ENCODE measurements at regions of chr14 and their contacts with region 1.

Region 1: DNA sequence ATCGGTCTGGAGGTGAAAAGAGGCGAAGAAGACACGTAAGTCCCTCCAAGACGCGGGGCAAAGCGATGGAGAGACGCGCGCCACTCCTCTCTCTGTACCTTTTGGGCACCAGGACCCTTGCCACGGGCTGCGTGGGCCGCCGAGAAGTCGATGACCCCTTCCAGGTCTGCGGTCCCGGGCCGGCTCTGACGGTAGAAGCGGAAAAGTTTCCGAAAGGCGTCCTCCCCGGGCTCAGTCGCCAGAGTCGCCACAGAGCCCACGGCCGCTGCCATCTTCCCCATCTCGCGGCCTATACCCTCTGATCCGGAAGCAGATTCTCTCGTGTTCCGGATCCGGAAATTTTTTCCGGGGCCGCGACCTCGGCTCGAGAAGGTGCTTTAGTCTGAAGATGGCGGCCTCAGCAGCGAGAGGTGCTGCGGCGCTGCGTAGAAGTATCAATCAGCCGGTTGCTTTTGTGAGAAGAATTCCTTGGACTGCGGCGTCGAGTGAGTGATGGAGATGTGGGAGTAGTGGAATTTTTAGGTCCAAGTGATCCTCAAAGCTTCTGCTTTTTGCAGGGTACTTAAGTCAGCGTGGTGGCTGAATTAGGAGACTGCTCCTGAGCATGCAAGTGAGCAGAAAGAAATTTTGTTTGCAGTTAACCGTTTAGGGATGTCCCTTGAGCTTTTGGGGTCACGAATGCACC is at the starts of genes ALKBH1 and SLIRP:
- DNase-seq: peak; percentile 73 to 91 (median 87)
- ATAC-seq: peak; percentile 98
- H3K4me3 ChIP-seq: peak within 1 kb of the TSS; percentile 88
- H3K4me3 Mint-ChIP-seq: peak within 1 kb of the TSS; percentile 86 to 98 (median 94)
- H3K27ac ChIP-seq: peak within 1 kb of the TSS; percentile 79
- H3K27ac Mint-ChIP-seq: peak within 1 kb of the TSS; percentile 91 to 99 (median 94)
- H3K4me1 ChIP-seq: peaks cover 22 to 24% of the 10 kb centered on the region in 2 donors
- H3K4me1 Mint-ChIP-seq: peaks cover 26 to 58% (median 44%) of the 10 kb centered on the region in 7 donors
- H3K27me3 ChIP-seq: no peaks in the 10 kb centered on the region
- H3K27me3 Mint-ChIP-seq: no peaks in the 10 kb centered on the region
- total RNA-seq, gene ALKBH1: 10.2 to 20.3 (median 14.1) TPM
- total RNA-seq, gene SLIRP: 35.9 to 66.6 (median 45.5) TPM

Region 2: DNA sequence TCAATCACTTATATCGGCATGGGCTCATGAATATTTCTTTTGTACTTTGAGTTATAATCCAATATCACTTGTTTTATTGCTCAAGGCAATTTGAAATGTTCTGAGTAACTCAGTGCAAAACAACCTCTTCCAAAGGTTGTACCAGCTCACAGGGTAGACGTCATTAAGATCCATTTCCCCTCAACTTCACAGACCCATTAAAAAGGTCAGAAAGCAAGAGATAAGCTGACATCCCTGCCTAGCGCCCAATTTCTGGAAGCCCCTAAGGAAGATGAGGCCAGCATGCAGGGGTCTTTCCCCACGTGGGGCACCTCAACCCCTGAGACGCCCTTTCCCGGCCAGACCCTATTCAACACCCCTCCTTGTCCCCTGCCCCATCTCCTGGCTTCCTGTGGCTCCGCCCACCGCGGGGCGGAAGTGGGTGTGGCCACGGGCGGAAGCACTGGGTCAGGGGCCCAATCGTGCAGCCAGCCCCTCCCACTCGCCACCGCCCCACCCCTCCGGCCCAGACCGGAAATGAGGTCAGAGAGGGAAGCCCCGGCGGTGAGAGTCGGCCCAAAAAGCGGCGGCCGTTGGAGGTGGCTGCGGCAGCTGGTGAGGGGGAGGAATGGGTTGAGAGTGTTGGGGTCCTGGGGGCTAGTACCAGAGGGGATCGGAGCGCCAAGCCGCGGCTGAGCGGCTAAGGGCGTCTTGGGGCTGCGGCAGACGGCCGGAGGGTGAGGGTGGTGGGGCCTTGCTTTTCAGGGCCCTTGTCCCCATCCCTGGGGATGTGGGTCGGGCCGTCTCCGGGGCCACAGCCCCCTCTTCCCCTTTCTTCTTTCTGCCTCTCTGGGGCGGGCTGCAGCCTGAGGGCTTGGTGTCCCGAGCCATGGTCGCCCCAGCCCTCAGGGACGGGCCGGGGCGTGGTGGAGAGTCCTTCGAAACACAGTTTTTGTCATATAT is 1556.2 kb before region 1 on chr14 and contains the start of gene GPATCH2L:
- CTCF ChIA-PET with region 1: no interaction called
- POLR2A ChIA-PET with region 1: no interaction called
- intact Hi-C with region 1: loop called in 1 of 2 experiments (anchors 5 kb)
- DNase-seq: peak; percentile 90 to 98 (median 95)
- ATAC-seq: peak; percentile 96
- H3K4me3 ChIP-seq: peak within 1 kb of the TSS; percentile 91
- H3K4me3 Mint-ChIP-seq: peak within 1 kb of the TSS; percentile 89 to 98 (median 95)
- H3K27ac ChIP-seq: peak within 1 kb of the TSS; percentile 95
- H3K27ac Mint-ChIP-seq: peak within 1 kb of the TSS; percentile 86 to 98 (median 96)
- H3K4me1 ChIP-seq: peaks cover 40 to 44% of the 10 kb centered on the region in 2 donors
- H3K4me1 Mint-ChIP-seq: peaks cover 40 to 56% (median 53%) of the 10 kb centered on the region in 7 donors
- H3K27me3 ChIP-seq: no peaks in the 10 kb centered on the region
- H3K27me3 Mint-ChIP-seq: peaks cover 0 to 18% (median 0%) of the 10 kb centered on the region in 5 donors
- total RNA-seq, gene GPATCH2L: 60.4 to 83.1 (median 66.6) TPM

Region 3: GRCh38 chr14:77554207-77554606 is 153.7 kb before region 1 on chr14:
- CTCF ChIA-PET with region 1: interaction called, 3 read pairs
- POLR2A ChIA-PET with region 1: interaction called, 3 read pairs
- intact Hi-C with region 1: loop called in 1 of 2 experiments (anchors 5 kb)
- DNase-seq: no peak
- ATAC-seq: peak; percentile 40
- H3K4me3 ChIP-seq: no peak overlapping the region
- H3K4me3 Mint-ChIP-seq: peak overlapping the region in 1 of 10 donors; percentile 77
- H3K27ac ChIP-seq: no peak overlapping the region
- H3K27ac Mint-ChIP-seq: peak overlapping the region in 4 of 9 donors; percentile 2 to 89 (median 26)
- H3K4me1 ChIP-seq: no peaks in the 10 kb centered on the region
- H3K4me1 Mint-ChIP-seq: peaks cover 0 to 27% (median 6%) of the 10 kb centered on the region in 7 donors
- H3K27me3 ChIP-seq: no peaks in the 10 kb centered on the region
- H3K27me3 Mint-ChIP-seq: no peaks in the 10 kb centered on the region

Region 4: DNA sequence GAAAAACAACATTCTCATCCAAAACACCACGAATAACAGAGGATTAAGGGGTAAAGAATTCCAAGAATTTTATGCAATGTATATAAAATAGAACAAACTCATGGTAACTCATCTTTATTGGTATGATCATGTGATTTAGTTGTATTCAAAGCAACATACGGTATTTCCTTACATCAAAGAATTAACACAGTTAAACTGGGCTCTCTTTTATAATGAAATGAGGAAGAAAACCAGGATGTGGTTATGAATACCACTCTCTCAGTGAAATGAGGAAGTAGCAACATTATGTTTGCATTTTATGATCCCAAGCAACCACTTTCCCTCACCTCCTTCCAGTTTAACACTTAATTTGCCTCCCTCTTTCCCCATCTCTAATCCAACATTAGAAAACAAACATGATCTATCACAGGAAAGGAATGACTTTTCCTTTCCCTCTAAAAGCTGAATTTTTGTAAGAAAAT is 114.3 kb before region 1 on chr14:
- CTCF ChIA-PET with region 1: no interaction called
- POLR2A ChIA-PET with region 1: no interaction called
- intact Hi-C with region 1: loop called in 1 of 2 experiments (anchors 2 kb)
- DNase-seq: peak in 6 of 9 donors; percentile 30 to 71 (median 68)
- ATAC-seq: peak; percentile 86
- H3K4me3 ChIP-seq: peak overlapping the region; percentile 15
- H3K4me3 Mint-ChIP-seq: peak overlapping the region; percentile 61 to 89 (median 80)
- H3K27ac ChIP-seq: peak overlapping the region; percentile 56
- H3K27ac Mint-ChIP-seq: peak overlapping the region; percentile 83 to 93 (median 89)
- H3K4me1 ChIP-seq: peaks cover 13 to 43% of the 10 kb centered on the region in 2 donors
- H3K4me1 Mint-ChIP-seq: peaks cover 29 to 72% (median 62%) of the 10 kb centered on the region in 7 donors
- H3K27me3 ChIP-seq: no peaks in the 10 kb centered on the region
- H3K27me3 Mint-ChIP-seq: no peaks in the 10 kb centered on the region

Region 5: GRCh38 chr14:77760381-77761246 is 52.7 kb after region 1 on chr14 and contains the start of gene SNW1:
- CTCF ChIA-PET with region 1: no interaction called
- POLR2A ChIA-PET with region 1: interaction called, 8 read pairs
- intact Hi-C with region 1: loop called (anchors 1 kb)
- DNase-seq: peak; percentile 80 to 94 (median 90)
- ATAC-seq: peak; percentile 95
- H3K4me3 ChIP-seq: peak within 1 kb of the TSS; percentile 94
- H3K4me3 Mint-ChIP-seq: peak within 1 kb of the TSS; percentile 91 to 97 (median 95)
- H3K27ac ChIP-seq: peak within 1 kb of the TSS; percentile 97
- H3K27ac Mint-ChIP-seq: peak within 1 kb of the TSS; percentile 92 to 99 (median 98)
- H3K4me1 ChIP-seq: peaks cover 28 to 30% of the 10 kb centered on the region in 2 donors
- H3K4me1 Mint-ChIP-seq: peaks cover 26 to 60% (median 42%) of the 10 kb centered on the region in 7 donors
- H3K27me3 ChIP-seq: no peaks in the 10 kb centered on the region
- H3K27me3 Mint-ChIP-seq: no peaks in the 10 kb centered on the region
- total RNA-seq, gene SNW1: 84.4 to 108 (median 97.7) TPM

Region 6: DNA sequence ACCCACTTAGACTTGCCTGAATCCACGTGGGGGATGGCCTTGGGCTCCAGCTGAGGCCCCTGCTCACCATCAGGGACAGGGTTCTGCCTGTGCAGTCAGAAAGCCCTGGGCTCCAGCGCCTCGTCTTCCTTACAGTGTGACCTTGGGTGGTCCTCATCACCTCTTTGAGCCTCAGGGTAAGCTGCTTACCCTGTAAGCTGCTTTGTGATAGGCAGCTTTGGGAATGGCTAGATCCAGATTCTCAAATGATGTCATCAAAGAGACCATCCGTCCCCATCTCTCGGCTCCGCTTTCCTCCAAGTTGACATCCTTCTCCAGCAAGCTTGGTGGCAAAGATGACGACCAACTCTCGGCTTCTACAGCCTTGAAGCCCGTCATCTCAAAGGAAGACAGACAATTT is 219.1 kb after region 1 on chr14:
- CTCF ChIA-PET with region 1: no interaction called
- POLR2A ChIA-PET with region 1: no interaction called
- intact Hi-C with region 1: no loop called
- DNase-seq: no peak
- ATAC-seq: no peak
- H3K4me3 ChIP-seq: no peak overlapping the region
- H3K4me3 Mint-ChIP-seq: no peak overlapping the region
- H3K27ac ChIP-seq: no peak overlapping the region
- H3K27ac Mint-ChIP-seq: no peak overlapping the region
- H3K4me1 ChIP-seq: no peaks in the 10 kb centered on the region
- H3K4me1 Mint-ChIP-seq: no peaks in the 10 kb centered on the region
- H3K27me3 ChIP-seq: no peaks in the 10 kb centered on the region
- H3K27me3 Mint-ChIP-seq: no peaks in the 10 kb centered on the region

Region 7: GRCh38 chr14:78074561-78074960 is 366.7 kb after region 1 on chr14:
- CTCF ChIA-PET with region 1: no interaction called
- POLR2A ChIA-PET with region 1: no interaction called
- intact Hi-C with region 1: no loop called
- DNase-seq: no peak
- ATAC-seq: no peak
- H3K4me3 ChIP-seq: no peak overlapping the region
- H3K4me3 Mint-ChIP-seq: no peak overlapping the region
- H3K27ac ChIP-seq: no peak overlapping the region
- H3K27ac Mint-ChIP-seq: no peak overlapping the region
- H3K4me1 ChIP-seq: no peaks in the 10 kb centered on the region
- H3K4me1 Mint-ChIP-seq: no peaks in the 10 kb centered on the region
- H3K27me3 ChIP-seq: no peaks in the 10 kb centered on the region
- H3K27me3 Mint-ChIP-seq: peaks cover 0 to 20% (median 2%) of the 10 kb centered on the region in 5 donors

Region 8: DNA sequence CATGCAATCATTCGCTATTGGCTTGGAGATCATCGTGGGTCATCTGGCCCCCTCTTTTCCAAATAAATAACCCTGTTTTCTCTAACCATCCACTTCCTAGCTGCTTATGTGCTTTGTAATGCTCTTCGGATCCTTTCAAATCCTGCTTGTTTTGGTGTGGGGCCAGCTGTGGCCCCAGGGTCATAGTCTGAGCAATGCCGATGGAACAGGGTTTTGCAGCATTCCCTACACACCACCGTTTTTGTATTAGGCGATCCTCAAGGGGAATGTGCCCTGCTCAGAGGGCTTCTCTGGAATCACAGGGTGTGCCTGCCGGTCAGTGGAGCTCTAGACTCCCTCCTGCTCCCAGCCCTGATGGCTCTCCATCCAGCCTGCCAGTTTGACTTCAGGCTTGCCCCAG is 384.2 kb after region 1 on chr14:
- CTCF ChIA-PET with region 1: no interaction called
- POLR2A ChIA-PET with region 1: no interaction called
- intact Hi-C with region 1: no loop called
- DNase-seq: no peak
- ATAC-seq: no peak
- H3K4me3 ChIP-seq: no peak overlapping the region
- H3K4me3 Mint-ChIP-seq: no peak overlapping the region
- H3K27ac ChIP-seq: no peak overlapping the region
- H3K27ac Mint-ChIP-seq: no peak overlapping the region
- H3K4me1 ChIP-seq: no peaks in the 10 kb centered on the region
- H3K4me1 Mint-ChIP-seq: no peaks in the 10 kb centered on the region
- H3K27me3 ChIP-seq: no peaks in the 10 kb centered on the region
- H3K27me3 Mint-ChIP-seq: peaks cover 0 to 30% (median 5%) of the 10 kb centered on the region in 5 donors

Measured in naive thymus-derived CD4-positive, alpha-beta T cell (primary cell).